Breast epithelium (tissue), 4 donors: ENCODE measurements at regions of chr12 and their contacts with region 1.

Region 1: DNA sequence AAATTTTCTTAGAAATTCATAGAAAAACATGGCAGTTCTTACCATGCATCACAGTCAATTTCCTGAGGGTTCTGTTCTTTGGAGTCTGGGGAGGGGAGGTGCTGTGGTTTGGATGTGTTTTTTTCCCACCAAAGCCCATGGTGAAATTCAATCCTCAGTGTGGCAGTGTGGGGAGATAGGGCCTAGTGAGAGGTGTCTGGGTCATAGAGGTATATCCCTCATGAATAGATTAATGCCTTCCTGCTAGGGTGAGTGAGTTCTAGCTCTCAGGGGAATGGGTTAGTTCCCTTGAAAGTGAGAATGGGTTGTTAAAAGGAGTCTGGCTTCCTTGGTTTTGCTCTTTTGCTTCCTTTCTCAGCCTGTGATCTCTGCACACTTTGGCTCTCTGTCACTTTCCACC is 277.8 kb downstream of the APAF1 start:
- DNase-seq: no peak
- H3K4me3 ChIP-seq: no peak overlapping the region
- H3K27ac ChIP-seq: no peak overlapping the region
- H3K4me1 ChIP-seq: no peaks in the 10 kb centered on the region
- H3K27me3 ChIP-seq: no peaks in the 10 kb centered on the region
- CTCF ChIP-seq: no peak
- POLR2A ChIP-seq: no peak

Region 2: GRCh38 chr12:99223579-99223978 is 300.7 kb after region 1 on chr12:
- intact Hi-C with region 1: loop called (anchors 5 kb)
- DNase-seq: no peak
- H3K4me3 ChIP-seq: no peak overlapping the region
- H3K27ac ChIP-seq: no peak overlapping the region
- H3K4me1 ChIP-seq: no peaks in the 10 kb centered on the region
- H3K27me3 ChIP-seq: no peaks in the 10 kb centered on the region
- CTCF ChIP-seq: no peak
- POLR2A ChIP-seq: no peak